ENCODE measurements at regions of chr22 and their contacts with region 1.

Region 1: DNA sequence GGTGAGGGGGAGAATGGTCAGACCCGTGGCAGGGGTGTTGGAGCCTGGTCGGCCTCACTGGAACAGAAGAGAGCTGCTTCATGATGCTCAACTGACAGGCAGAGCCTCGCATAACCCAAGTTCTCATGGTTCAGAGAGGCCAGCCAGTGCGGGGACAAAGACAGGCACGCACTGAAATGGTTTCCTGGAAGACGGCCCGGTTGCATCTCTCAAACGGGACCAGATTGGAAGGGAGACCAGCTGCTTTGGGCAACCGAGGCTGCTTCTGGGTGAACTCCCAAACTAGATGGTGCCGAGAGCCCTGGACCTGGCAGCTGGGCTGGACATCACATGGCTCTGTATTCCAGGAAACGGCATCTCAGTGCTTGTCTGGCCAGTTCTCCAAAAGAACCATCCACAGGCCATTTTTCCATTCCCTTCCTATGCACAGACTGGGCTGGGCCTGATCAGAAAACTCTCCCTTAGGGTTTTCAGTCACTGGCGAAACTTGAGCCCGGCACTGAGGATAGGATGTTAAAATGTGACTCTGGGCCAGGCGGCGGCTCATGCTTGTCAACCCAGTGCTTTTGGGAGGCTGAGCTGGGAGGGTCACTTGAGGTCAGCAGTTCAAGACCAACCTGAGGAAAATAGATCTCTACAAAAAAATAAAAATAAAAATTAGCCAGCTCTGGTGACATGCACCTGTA is 80.1 kb upstream of the PRODH start:
- DNase-seq: no peak
- ATAC-seq: peak; percentile 8 to 45 (median 36)
- H3K4me3 ChIP-seq: no peak overlapping the region
- H3K27ac ChIP-seq: no peak overlapping the region
- H3K4me1 ChIP-seq: peaks cover 5% of the 10 kb centered on the region
- H3K27me3 ChIP-seq: no peaks in the 10 kb centered on the region
- CTCF ChIP-seq: no peak

Region 2: DNA sequence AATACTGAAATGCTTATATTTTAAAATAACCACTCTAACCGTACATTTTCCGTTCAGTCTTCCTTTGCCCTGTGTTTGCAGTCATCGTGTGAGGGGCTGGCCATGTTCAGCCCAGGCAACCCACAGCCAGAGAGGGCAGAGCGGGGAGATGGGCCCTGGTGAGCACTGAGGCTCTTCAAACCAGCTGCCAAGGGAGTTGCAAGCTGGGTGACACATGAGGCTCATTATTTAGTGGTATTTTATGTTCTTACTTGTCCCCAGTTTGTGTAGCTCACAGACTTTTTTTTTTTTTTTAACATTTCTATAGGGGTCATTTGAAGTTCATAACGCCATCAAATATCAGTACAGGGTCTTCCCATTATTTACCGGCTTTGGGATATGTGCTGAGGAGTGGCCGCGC is 128.1 kb before region 1 on chr22:
- intact Hi-C with region 1: no loop called
- DNase-seq: no peak
- ATAC-seq: no peak
- H3K4me3 ChIP-seq: no peak overlapping the region
- H3K27ac ChIP-seq: no peak overlapping the region
- H3K4me1 ChIP-seq: no peaks in the 10 kb centered on the region
- H3K27me3 ChIP-seq: no peaks in the 10 kb centered on the region
- CTCF ChIP-seq: no peak

Region 3: DNA sequence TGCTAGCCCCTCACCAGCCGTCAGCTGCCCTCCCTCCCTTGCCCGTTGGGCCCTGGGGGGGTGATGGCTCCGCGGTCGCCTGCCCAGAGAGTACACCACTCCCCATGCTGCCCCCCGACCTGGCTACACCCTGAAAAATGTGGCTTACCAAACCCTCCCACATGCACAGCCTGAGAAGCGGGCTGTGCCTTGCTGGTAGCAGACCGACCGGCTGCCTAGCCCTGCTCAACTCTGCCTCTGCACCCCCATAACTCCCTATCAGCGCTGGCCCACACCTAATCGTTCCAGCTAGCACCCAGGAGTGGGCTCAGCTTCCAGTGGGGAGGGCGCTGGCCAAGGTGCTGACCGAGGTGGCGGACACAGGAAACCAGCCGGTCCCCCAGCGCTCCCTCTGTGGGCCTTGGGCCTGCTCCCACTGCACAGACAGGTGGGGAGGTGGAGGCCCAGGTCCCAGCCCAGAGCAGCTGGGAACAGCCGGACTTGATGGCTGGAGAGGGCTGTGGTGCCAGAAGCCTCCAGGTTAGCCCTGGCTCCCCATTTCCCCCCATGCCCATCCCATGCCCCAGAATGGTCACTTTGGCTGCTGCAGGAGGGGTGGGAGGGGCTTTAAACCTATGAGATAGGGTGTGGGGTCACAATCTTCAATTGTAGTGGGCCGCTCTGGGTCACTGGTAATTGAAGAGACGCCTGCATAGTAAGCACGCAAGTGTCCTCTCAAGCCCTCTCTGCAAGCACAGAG is 48.0 kb before region 1 on chr22:
- intact Hi-C with region 1: loop called in 1 of 2 experiments (anchors 10 kb)
- DNase-seq: peak in 1 of 2 donors; percentile 61
- ATAC-seq: peak in 1 of 4 donors; percentile 21
- H3K4me3 ChIP-seq: no peak overlapping the region
- H3K27ac ChIP-seq: no peak overlapping the region
- H3K4me1 ChIP-seq: no peaks in the 10 kb centered on the region
- H3K27me3 ChIP-seq: peaks cover 0 to 35% (median 10%) of the 10 kb centered on the region in 3 donors
- CTCF ChIP-seq: no peak

Region 4: GRCh38 chr22:19066531-19067271 is 50.5 kb after region 1 on chr22:
- intact Hi-C with region 1: loop called in 1 of 2 experiments (anchors 10 kb)
- DNase-seq: peak; percentile 42 to 72
- ATAC-seq: peak; percentile 84 to 93 (median 90)
- H3K4me3 ChIP-seq: no peak overlapping the region
- H3K27ac ChIP-seq: peak overlapping the region; percentile 60
- H3K4me1 ChIP-seq: peaks cover 13% of the 10 kb centered on the region
- H3K27me3 ChIP-seq: no peaks in the 10 kb centered on the region
- CTCF ChIP-seq: no peak

Region 5: DNA sequence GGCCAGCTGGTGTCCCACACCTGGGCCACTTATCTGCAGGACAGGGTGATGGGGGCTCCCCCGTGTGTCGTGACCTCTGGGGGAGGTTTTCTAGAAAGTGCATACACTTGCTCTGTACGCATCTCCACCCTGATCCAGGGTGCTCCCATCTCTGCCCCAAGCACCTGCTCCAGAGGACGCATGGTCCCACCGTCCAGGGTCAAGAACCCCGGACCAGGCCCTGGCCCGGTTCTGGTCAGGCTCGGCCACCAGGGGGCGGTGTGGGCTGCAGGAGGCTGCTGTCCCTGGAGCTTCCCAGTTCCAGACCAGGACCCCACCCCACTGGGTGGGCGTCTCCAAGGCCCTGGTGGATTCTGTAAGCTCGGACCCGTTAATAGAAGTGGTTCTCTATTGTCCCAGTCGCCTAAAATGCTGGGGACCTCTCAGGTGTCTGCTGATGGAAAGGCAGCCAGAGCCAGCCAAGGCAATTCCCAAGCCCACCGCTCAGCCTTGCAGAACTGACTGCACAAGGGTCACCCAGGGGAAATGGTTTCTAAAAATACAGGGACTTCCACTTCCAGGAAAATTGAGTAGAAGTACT is 663.4 kb after region 1 on chr22:
- intact Hi-C with region 1: no loop called
- DNase-seq: peak; percentile 65 to 80
- ATAC-seq: peak; percentile 73 to 92 (median 83)
- H3K4me3 ChIP-seq: no peak overlapping the region
- H3K27ac ChIP-seq: no peak overlapping the region
- H3K4me1 ChIP-seq: no peaks in the 10 kb centered on the region
- H3K27me3 ChIP-seq: peaks cover 0 to 22% (median 0%) of the 10 kb centered on the region in 3 donors
- CTCF ChIP-seq: peak; percentile 92

Measured in psoas muscle (tissue), 8 donors.